Heart left ventricle (tissue), 16 donors: ENCODE measurements at regions of chr1 and their contacts with region 1.

Region 1: DNA sequence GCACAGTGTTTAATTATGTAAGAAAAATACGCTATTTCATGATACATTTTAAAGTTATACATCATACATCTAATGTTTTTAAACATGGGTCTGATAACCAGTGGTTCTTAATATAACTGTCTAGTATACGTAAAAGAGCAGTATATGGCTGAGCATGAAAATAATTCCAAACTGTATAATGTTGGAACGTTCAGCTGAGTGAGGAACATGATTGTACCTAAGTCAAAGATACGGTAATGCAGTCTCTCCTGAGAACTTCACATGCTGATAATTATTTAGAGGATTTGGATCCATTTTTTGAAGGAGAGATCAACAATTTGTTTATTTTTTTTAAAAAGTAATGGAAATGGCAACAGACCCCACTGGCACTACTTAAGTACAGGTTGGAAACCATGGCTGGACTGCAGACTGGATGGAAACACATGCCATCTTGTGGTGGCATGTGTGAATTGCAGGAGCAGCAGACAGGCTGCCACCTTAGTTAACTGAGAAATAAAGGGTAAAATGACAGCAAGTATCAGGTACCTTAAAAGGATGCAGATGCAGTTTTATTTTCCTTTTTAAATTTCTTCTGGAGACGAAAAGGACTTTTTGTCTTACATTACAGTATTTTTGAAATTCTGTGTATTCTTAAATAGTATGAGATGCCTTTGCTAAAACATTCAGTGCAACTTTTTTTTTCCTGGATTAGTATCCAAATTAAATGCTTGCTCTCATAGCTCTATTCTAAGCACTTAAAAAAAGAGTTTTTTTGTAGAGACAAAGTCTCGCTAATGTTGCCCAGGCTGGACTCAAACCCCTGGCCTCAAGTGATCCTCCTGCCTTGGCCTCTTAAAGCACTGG is 73.8 kb downstream of the MTR start:
- DNase-seq: no peak
- ATAC-seq: no peak
- H3K4me3 ChIP-seq: no peak overlapping the region
- H3K27ac ChIP-seq: no peak overlapping the region
- H3K4me1 ChIP-seq: peaks cover 0 to 39% (median 12%) of the 10 kb centered on the region in 12 donors
- H3K27me3 ChIP-seq: no peaks in the 10 kb centered on the region
- CTCF ChIP-seq: peak; percentile 63 to 91 (median 78)
- POLR2A ChIP-seq: no peak

Region 2: DNA sequence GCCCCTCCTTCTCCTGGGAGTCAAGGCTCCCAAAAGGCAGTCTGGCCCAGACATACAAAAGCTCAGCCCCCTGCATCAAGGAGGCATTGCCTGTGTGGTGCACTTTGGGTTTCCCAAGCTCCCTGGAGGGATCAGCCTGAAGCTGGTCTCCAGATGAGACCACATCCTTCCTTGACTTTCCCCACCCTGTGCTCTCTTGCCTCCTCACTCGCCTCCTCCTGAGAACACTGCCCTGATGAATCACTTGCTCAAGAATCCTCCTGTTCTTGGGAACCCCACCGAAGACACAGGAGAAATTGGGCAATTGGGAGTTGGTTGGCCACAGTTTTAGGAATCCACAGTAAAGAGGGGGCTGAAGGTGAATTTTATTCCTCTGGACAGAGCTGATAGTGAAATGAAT is 967.4 kb before region 1 on chr1:
- intact Hi-C with region 1: no loop called
- DNase-seq: no peak
- ATAC-seq: no peak
- H3K4me3 ChIP-seq: no peak overlapping the region
- H3K27ac ChIP-seq: no peak overlapping the region
- H3K4me1 ChIP-seq: peaks cover 0 to 8% (median 0%) of the 10 kb centered on the region in 12 donors
- H3K27me3 ChIP-seq: no peaks in the 10 kb centered on the region
- CTCF ChIP-seq: no peak
- POLR2A ChIP-seq: no peak

Region 3: DNA sequence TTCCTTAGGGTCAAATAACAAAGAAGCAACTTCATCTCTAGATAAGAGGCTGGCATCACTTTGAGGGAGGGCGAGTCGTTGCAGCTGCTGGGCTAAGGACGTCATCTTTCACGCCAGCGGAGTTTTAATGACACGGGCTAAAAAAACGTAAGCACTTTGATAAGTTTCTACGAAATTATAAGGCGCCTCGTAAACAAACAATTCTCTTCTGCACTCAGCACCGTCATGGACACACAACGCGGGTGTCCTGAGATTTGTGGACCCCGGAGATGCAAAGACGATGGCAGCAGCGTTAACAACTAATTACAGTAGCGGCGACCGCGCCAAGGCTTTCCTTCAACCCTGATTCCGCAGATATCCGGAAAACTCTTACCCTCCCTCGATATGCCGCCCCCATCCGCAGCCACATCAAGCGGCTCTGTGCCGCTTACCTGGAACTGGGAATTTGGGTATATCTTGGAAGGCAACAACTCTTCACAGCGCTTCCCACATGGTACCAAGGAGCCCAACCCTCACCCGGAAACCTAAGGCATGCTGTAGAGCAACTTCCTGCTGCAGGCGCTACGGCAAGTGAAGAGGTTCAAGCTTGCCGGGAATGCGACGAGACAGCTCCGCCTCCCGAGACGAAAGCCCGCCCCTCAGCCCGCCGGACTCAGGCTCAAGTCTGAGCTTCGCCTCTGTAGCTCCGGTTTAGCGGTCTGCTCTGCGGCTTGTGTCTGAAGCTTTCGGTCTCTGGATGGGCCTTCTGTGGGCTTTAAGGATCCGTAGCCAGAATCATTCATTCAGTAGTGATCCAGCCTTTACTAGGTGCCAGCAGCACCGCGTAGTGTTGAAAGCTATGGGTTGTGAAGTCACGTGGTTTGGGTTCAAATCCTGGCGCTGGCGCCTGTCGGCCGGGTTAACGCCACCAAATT is 264.6 kb before region 1 on chr1 and contains the start of gene HEATR1:
- intact Hi-C with region 1: loop called in 1 of 10 experiments (anchors 10 kb)
- DNase-seq: peak; percentile 95 to 96 (median 95)
- ATAC-seq: peak; percentile 93 to 99 (median 98)
- H3K4me3 ChIP-seq: peak within 1 kb of the TSS; percentile 50 to 96 (median 80)
- H3K27ac ChIP-seq: peak within 1 kb of the TSS in 11 of 12 donors; percentile 71 to 90 (median 85)
- H3K4me1 ChIP-seq: peaks cover 0 to 23% (median 13%) of the 10 kb centered on the region in 12 donors
- H3K27me3 ChIP-seq: no peaks in the 10 kb centered on the region
- CTCF ChIP-seq: no peak
- POLR2A ChIP-seq: peak in 1 of 2 donors; percentile 55
- total RNA-seq, gene HEATR1: 6.6 to 17.2 (median 11.8) TPM

Region 4: GRCh38 chr1:236762410-236762809 is 106.4 kb before region 1 on chr1:
- intact Hi-C with region 1: loop called in 1 of 10 experiments (anchors 10 kb)
- DNase-seq: no peak
- ATAC-seq: peak in 1 of 4 donors; percentile 44
- H3K4me3 ChIP-seq: no peak overlapping the region
- H3K27ac ChIP-seq: no peak overlapping the region
- H3K4me1 ChIP-seq: peaks cover 0 to 25% (median 0%) of the 10 kb centered on the region in 12 donors
- H3K27me3 ChIP-seq: no peaks in the 10 kb centered on the region
- CTCF ChIP-seq: no peak
- POLR2A ChIP-seq: no peak

Region 5: GRCh38 chr1:236795035-236795756 is 73.7 kb before region 1 on chr1 and contains the start of gene MTR:
- intact Hi-C with region 1: loop called in 1 of 10 experiments (anchors 10 kb)
- DNase-seq: peak; percentile 98 to 99 (median 98)
- ATAC-seq: peak; percentile 99
- H3K4me3 ChIP-seq: peak within 1 kb of the TSS; percentile 71 to 99 (median 84)
- H3K27ac ChIP-seq: peak within 1 kb of the TSS; percentile 67 to 97 (median 92)
- H3K4me1 ChIP-seq: peaks cover 0 to 38% (median 24%) of the 10 kb centered on the region in 12 donors
- H3K27me3 ChIP-seq: no peaks in the 10 kb centered on the region
- CTCF ChIP-seq: no peak
- POLR2A ChIP-seq: peak; percentile 88 to 96
- total RNA-seq, gene MTR: 30.8 to 84.2 (median 51.4) TPM

Region 6: GRCh38 chr1:236815941-236816340 is 52.9 kb before region 1 on chr1:
- intact Hi-C with region 1: loop called in 1 of 10 experiments (anchors 2 kb)
- DNase-seq: no peak
- ATAC-seq: no peak
- H3K4me3 ChIP-seq: no peak overlapping the region
- H3K27ac ChIP-seq: no peak overlapping the region
- H3K4me1 ChIP-seq: peaks cover 0 to 5% (median 0%) of the 10 kb centered on the region in 12 donors
- H3K27me3 ChIP-seq: no peaks in the 10 kb centered on the region
- CTCF ChIP-seq: no peak
- POLR2A ChIP-seq: no peak